Right ventricle myocardium inferior (tissue), 1 donor: ENCODE measurements at regions of chr5 and their contacts with region 1.

Region 1: GRCh38 chr5:86968301-86968753 is 299.4 kb upstream of the RASA1 start:
- DNase-seq: peak; percentile 70
- ATAC-seq: peak; percentile 53

Region 2: DNA sequence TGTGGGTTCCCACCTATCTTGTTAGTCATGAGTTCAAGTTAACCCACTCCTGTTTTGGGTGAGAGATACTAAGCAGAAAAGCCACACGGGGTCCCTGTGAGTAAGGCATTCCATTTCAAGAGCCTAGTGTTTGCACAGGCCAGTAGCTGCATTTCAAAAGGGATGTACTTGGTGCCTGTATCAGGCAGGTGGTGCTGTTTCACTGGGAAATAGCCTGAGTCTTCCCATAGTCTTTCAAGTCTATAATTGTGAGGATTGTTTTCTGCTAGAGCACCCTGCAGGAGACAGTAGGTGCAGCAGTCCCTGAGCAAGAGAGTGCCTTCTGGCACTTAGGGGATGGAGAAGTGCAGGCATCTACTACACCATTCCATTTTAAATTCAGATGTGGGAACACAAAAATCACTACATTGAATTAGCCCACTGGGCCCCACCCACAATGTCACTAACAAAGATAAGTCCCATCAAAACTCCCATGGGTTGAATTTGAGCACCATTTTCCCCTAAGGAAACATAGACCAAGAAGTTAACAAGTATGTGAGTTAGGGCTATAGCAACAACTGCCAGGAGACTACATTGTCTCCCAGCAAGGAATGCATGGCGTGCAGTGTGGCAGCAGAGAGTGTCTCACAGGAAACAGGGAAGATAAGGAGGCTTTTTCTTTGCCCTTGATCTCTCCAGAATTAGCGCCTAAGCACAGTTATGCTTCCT is 87.4 kb before region 1 on chr5:
- intact Hi-C with region 1: loop called (anchors 10 kb)
- DNase-seq: no peak
- ATAC-seq: peak; percentile 92

Region 3: DNA sequence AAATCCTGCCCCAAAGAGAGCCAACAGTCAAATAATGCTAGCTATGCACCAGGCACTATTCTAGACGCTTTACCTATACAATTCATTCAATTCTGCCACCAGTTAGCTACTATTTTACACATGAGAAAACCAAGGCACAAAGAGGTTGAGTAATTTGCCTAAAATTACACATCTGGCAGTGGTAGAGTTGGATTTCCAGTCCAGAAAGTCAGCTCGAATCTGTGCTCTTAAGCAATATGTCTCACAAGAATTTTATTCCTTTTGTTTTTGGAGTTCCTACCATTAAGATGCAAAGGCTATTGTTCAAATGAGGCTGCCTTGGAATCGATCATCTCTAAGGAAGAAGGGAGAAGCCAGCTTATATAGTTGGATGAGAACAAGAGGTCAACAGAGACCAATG is 42.4 kb after region 1 on chr5:
- intact Hi-C with region 1: loop called (anchors 5 kb)
- DNase-seq: no peak
- ATAC-seq: peak; percentile 37